Right lobe of liver (tissue), 6 donors: ENCODE measurements at regions of chr20 and their contacts with region 1.

Region 1: GRCh38 chr20:33097001-33097400 is 17.6 kb downstream of the BPIFB4 start:
- DNase-seq: no peak
- ATAC-seq: no peak
- H3K4me3 ChIP-seq: no peak overlapping the region
- H3K27ac ChIP-seq: no peak overlapping the region
- H3K4me1 ChIP-seq: no peaks in the 10 kb centered on the region
- H3K27me3 ChIP-seq: no peaks in the 10 kb centered on the region
- CTCF ChIP-seq: no peak
- POLR2A ChIP-seq: no peak

Region 2: GRCh38 chr20:33169176-33169794 is 72.3 kb after region 1 on chr20:
- intact Hi-C with region 1: no loop called
- DNase-seq: no peak
- ATAC-seq: no peak
- H3K4me3 ChIP-seq: no peak overlapping the region
- H3K27ac ChIP-seq: no peak overlapping the region
- H3K4me1 ChIP-seq: no peaks in the 10 kb centered on the region
- H3K27me3 ChIP-seq: no peaks in the 10 kb centered on the region
- CTCF ChIP-seq: peak; percentile 10 to 36 (median 18)
- POLR2A ChIP-seq: no peak

Region 3: GRCh38 chr20:33211817-33212424 is 114.9 kb after region 1 on chr20:
- intact Hi-C with region 1: loop called (anchors 5 to 10 kb)
- DNase-seq: peak; percentile 47 to 72 (median 62)
- ATAC-seq: peak; percentile 89 to 95 (median 93)
- H3K4me3 ChIP-seq: no peak overlapping the region
- H3K27ac ChIP-seq: no peak overlapping the region
- H3K4me1 ChIP-seq: peaks cover 0 to 3% (median 0%) of the 10 kb centered on the region in 4 donors
- H3K27me3 ChIP-seq: no peaks in the 10 kb centered on the region
- CTCF ChIP-seq: peak; percentile 58 to 66 (median 60)
- POLR2A ChIP-seq: no peak